Head of caudate nucleus (tissue), 42 donors: ENCODE measurements at regions of chr1 and their contacts with region 1.

Region 1: GRCh38 chr1:153352523-153352922 is 3.9 kb upstream of the PGLYRP4 start:
- DNase-seq: peak in 41 of 42 donors; percentile 43 to 90 (median 75)

Region 2: GRCh38 chr1:153494976-153495535 is 142.5 kb after region 1 on chr1:
- intact Hi-C with region 1: loop called (anchors 2 kb)
- DNase-seq: peak; percentile 34 to 89 (median 71)